Cardiac septum (tissue), 1 donor: ENCODE measurements at regions of chr3 and their contacts with region 1.

Region 1: GRCh38 chr3:188954590-188955208 is 217.1 kb upstream of the TPRG1 start:
- DNase-seq: peak; percentile 92

Region 2: GRCh38 chr3:188052169-188053030 is 902.3 kb before region 1 on chr3:
- intact Hi-C with region 1: loop called (anchors 5 kb)
- DNase-seq: peak; percentile 87

Region 3: GRCh38 chr3:188262913-188263683 is 691.6 kb before region 1 on chr3:
- intact Hi-C with region 1: loop called (anchors 10 kb)
- DNase-seq: no peak

Region 4: GRCh38 chr3:188286087-188286513 is 668.6 kb before region 1 on chr3:
- intact Hi-C with region 1: loop called (anchors 5 kb)
- DNase-seq: peak; percentile 80

Region 5: DNA sequence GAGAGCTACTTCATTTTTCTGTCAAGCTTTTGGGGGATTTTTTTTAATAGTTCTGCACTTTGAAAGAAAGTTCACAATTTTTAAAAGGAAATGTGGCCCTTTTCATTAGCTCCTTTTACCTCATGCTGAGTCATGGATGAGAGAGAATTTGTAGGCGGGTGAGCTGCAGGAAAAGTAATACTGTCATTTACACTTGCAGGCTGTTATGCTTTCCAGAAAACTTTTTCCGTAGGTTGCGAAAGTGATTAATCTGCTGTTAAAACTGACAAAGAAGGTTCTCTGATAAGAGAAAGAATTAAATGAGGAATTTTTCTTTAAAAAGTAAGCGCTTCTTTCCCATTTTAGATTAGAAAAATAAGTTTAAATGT is 370.6 kb before region 1 on chr3:
- intact Hi-C with region 1: loop called (anchors 5 kb)
- DNase-seq: no peak

Region 6: GRCh38 chr3:189038773-189039745 is 84.4 kb after region 1 on chr3:
- intact Hi-C with region 1: no loop called
- DNase-seq: no peak

Region 7: GRCh38 chr3:189148081-189148507 is 193.4 kb after region 1 on chr3:
- intact Hi-C with region 1: loop called (anchors 5 kb)
- DNase-seq: peak; percentile 77